ENCODE measurements at regions of chr14 and their contacts with region 1.

Region 1: GRCh38 chr14:64294672-64295413 is 672 bp upstream of the ESR2 start:
- DNase-seq: peak; percentile 33
- ATAC-seq: peak; percentile 98
- H3K4me3 ChIP-seq: peak overlapping the region; percentile 15 to 70 (median 53)
- H3K27ac ChIP-seq: no peak overlapping the region
- H3K4me1 ChIP-seq: peaks cover 20% of the 10 kb centered on the region
- H3K27me3 ChIP-seq: peaks cover 0 to 21% of the 10 kb centered on the region in 2 experiments; a peak in 3 of 5 replicates
- CTCF ChIP-seq: peak; percentile 90
- EP300 ChIP-seq: no peak
- POLR2A ChIP-seq: no peak
- RAD21 ChIP-seq: peak; percentile 73

Region 2: GRCh38 chr14:63795532-63795931 is 499.3 kb before region 1 on chr14:
- CTCF ChIA-PET with region 1: interaction called, 15 read pairs
- POLR2A ChIA-PET with region 1: no interaction called
- in situ Hi-C with region 1: loop called (anchors 10 kb)
- intact Hi-C with region 1: loop called (anchors 1 kb)
- DNase-seq: no peak
- ATAC-seq: no peak
- H3K4me3 ChIP-seq: no peak overlapping the region
- H3K27ac ChIP-seq: no peak overlapping the region
- H3K4me1 ChIP-seq: peaks cover 4% of the 10 kb centered on the region; the same call in 1 of the 2 replicates
- H3K27me3 ChIP-seq: no peaks in the 10 kb centered on the region
- CTCF ChIP-seq: no peak
- EP300 ChIP-seq: no peak
- POLR2A ChIP-seq: no peak
- RAD21 ChIP-seq: no peak

Region 3: DNA sequence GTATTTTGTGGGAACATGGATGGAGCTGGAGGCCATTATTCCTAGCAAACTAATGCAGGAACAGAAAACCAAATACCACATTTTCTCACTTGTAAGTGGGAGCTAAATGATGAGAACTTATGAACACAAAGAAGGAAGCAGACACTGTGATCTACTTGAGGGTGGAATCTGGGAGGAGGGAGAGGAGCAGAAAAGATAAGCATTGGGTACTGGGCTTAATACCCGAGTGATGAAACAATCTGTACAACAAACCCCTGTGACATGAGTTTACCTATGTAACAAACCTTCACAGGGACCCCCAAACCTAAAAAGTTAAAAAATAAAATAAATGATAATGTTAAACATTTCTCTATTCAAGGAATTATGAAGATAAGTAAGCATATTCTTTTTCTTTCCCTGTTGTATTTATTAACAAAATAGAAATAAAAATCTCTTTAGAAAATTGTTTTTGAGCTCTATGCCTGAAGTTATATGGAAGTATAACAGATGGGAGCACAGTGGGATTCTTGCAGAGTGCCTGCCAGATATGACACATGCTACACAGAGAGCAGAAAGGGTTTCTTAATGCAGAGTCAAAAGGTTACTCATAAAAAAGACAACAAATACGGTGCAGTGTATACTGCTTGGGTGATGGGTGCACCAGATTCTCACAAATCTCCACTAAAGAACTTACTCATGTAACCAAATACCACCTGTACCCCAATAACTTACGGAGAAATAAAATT is 494.0 kb before region 1 on chr14:
- CTCF ChIA-PET with region 1: interaction called, 15 read pairs
- POLR2A ChIA-PET with region 1: no interaction called
- in situ Hi-C with region 1: loop called (anchors 10 kb)
- intact Hi-C with region 1: loop called (anchors 1 kb)
- DNase-seq: no peak
- ATAC-seq: no peak
- H3K4me3 ChIP-seq: no peak overlapping the region
- H3K27ac ChIP-seq: no peak overlapping the region
- H3K4me1 ChIP-seq: peaks cover 4% of the 10 kb centered on the region; the same call in 1 of the 2 replicates
- H3K27me3 ChIP-seq: no peaks in the 10 kb centered on the region
- CTCF ChIP-seq: no peak
- EP300 ChIP-seq: no peak
- POLR2A ChIP-seq: no peak
- RAD21 ChIP-seq: no peak

Region 4: GRCh38 chr14:63840981-63841380 is 453.9 kb before region 1 on chr14:
- CTCF ChIA-PET with region 1: interaction called, 9 read pairs
- POLR2A ChIA-PET with region 1: no interaction called
- in situ Hi-C with region 1: no loop called
- intact Hi-C with region 1: loop called (anchors 1 kb)
- DNase-seq: peak; percentile 44
- ATAC-seq: peak; percentile 84
- H3K4me3 ChIP-seq: no peak overlapping the region
- H3K27ac ChIP-seq: no peak overlapping the region
- H3K4me1 ChIP-seq: no peaks in the 10 kb centered on the region
- H3K27me3 ChIP-seq: no peaks in the 10 kb centered on the region; a peak in 2 of 5 replicates
- CTCF ChIP-seq: peak; percentile 60
- EP300 ChIP-seq: no peak
- POLR2A ChIP-seq: no peak
- RAD21 ChIP-seq: no peak

Region 5: DNA sequence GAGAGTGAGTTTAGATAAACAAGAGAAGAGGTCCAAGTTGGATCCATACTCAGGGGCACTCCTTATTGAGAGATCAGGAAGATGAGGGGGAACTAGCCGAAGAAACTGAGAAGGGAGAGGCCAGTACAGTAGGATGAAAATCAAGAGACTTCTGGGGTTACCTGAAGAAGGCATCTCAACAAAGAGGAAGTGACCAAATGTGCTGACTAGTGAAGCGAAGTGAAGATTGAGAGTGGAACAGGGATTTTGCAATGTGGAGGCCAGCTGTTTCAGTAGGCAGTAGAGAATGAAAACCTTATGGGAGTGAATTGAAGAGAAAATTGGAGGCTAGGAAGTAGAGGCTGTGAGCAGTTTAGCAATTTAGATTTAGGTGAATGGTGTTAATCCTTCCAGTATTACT is 289.0 kb before region 1 on chr14:
- CTCF ChIA-PET with region 1: interaction called, 6 read pairs
- POLR2A ChIA-PET with region 1: no interaction called
- in situ Hi-C with region 1: loop called (anchors 25 kb)
- intact Hi-C with region 1: loop called (anchors 1 kb)
- DNase-seq: no peak
- ATAC-seq: no peak
- H3K4me3 ChIP-seq: no peak overlapping the region
- H3K27ac ChIP-seq: no peak overlapping the region
- H3K4me1 ChIP-seq: no peaks in the 10 kb centered on the region
- H3K27me3 ChIP-seq: no peaks in the 10 kb centered on the region
- CTCF ChIP-seq: no peak
- EP300 ChIP-seq: no peak
- POLR2A ChIP-seq: no peak
- RAD21 ChIP-seq: no peak

Region 6: DNA sequence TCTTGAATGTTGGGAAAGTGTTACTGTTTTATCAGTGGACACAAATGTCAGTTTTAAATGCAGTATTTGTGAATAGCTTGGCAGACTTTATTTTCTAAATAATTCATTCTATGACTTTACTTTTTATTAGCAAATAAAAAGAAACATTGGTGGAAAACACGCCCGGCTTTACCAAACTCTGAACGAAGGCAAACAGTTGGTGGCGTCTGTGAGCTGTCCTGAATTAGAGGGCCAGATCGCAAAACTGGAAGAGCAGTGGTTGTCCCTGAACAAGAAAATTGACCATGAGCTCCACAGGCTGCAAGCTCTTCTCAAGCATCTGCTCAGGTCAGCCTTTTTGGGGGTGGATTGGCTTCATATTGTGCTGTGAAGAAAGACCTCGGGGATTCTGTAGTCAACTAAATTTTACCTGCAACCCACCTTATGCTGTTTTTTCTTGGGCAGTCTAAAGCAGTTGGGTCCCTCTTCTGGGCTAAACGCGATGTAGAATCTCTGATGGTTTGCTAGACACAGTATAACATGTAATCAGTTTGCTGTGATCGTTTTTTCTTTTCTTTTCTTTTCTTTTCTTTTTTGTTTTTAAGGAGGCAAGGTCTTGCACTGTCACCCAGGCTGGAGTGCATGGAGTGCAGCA is 157.1 kb before region 1 on chr14:
- CTCF ChIA-PET with region 1: interaction called, 3 read pairs
- POLR2A ChIA-PET with region 1: no interaction called
- in situ Hi-C with region 1: loop called (anchors 10 kb)
- intact Hi-C with region 1: no loop called
- DNase-seq: no peak
- ATAC-seq: no peak
- H3K4me3 ChIP-seq: no peak overlapping the region
- H3K27ac ChIP-seq: no peak overlapping the region
- H3K4me1 ChIP-seq: no peaks in the 10 kb centered on the region
- H3K27me3 ChIP-seq: no peaks in the 10 kb centered on the region
- CTCF ChIP-seq: no peak; the same call in 1 of the 2 replicates
- EP300 ChIP-seq: no peak
- POLR2A ChIP-seq: no peak
- RAD21 ChIP-seq: no peak

Region 7: DNA sequence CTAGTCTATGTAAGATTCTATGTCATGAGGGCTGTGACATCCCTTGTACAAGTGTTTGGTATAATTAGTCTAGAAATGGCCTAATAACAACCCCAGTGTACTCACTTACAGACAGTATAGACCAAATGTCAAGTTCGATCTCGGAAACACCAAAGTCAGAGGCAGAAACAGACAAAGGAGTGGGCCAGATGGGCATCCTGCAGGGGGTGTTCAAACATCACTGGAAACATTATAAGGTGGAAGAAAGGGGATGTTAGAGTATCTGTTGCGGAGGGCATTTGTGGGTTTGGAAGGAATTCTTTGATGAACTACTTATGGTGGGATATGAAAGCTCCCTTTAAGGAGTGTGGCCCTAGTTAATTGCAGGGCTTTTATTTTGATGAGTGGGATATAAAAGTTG is 135.3 kb before region 1 on chr14:
- CTCF ChIA-PET with region 1: no interaction called
- POLR2A ChIA-PET with region 1: no interaction called
- in situ Hi-C with region 1: no loop called
- intact Hi-C with region 1: loop called (anchors 10 kb)
- DNase-seq: no peak
- ATAC-seq: no peak
- H3K4me3 ChIP-seq: no peak overlapping the region
- H3K27ac ChIP-seq: no peak overlapping the region
- H3K4me1 ChIP-seq: no peaks in the 10 kb centered on the region
- H3K27me3 ChIP-seq: no peaks in the 10 kb centered on the region
- CTCF ChIP-seq: no peak
- EP300 ChIP-seq: no peak
- POLR2A ChIP-seq: no peak
- RAD21 ChIP-seq: no peak

Measured in HepG2 (cell line).